ENCODE measurements at regions of chr4 and their contacts with region 1.

Region 1: DNA sequence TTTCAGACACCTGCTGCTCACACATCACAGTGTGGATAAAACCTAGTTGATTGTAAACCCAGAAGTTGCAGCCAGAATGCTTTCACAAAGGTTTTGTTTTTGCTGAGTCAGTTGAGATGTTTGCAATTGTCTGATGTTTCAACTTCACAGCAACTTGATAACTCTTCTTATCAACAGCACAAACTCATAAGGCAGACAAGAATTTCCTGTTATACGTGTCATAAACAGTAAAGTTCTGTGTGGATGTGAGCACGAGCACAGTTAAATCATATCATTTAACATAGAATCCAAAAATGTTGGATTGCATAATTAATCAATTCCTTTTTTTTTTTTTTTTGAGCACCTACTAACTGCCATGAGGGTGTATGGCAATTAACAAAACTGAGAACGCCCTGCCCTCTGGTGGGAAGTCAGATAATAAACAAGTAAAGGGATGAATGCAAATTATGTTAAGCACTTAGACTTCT is 512.2 kb downstream of the PDHA2 start:
- DNase-seq: peak; percentile 77
- H3K4me3 ChIP-seq: no peak overlapping the region
- H3K27ac ChIP-seq: peak overlapping the region; percentile 62
- H3K4me1 ChIP-seq: peaks cover 30% of the 10 kb centered on the region
- H3K27me3 ChIP-seq: no peaks in the 10 kb centered on the region
- CTCF ChIP-seq: peak; percentile 13 to 21
- POLR2A ChIP-seq: no peak

Region 2: DNA sequence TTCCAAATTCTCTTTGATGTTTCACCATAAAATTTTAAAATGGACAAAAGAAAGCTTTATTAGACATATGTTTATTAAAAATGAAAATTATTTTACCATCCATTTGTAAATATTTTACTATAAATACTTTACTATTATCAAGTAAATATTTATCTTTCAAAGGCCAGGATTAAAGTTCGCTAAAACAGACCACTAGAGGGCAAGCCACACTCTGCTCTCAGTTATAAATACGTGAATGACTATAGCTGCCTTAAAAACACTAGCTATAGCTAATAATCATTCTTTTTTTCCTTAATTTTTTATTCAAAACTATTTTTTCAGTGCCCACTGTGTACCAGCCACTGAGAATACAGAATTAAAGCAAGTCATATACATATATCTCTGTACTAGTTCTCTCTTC is 841.9 kb before region 1 on chr4:
- CTCF ChIA-PET with region 1: interaction called, 16 read pairs
- POLR2A ChIA-PET with region 1: no interaction called
- dilution Hi-C with region 1: no loop called
- intact Hi-C with region 1: loop called (anchors 1 kb)
- DNase-seq: peak; percentile 52
- H3K4me3 ChIP-seq: no peak overlapping the region
- H3K27ac ChIP-seq: no peak overlapping the region
- H3K4me1 ChIP-seq: peaks cover 37% of the 10 kb centered on the region
- H3K27me3 ChIP-seq: no peaks in the 10 kb centered on the region
- CTCF ChIP-seq: peak; percentile 45 to 52
- POLR2A ChIP-seq: no peak

Region 3: DNA sequence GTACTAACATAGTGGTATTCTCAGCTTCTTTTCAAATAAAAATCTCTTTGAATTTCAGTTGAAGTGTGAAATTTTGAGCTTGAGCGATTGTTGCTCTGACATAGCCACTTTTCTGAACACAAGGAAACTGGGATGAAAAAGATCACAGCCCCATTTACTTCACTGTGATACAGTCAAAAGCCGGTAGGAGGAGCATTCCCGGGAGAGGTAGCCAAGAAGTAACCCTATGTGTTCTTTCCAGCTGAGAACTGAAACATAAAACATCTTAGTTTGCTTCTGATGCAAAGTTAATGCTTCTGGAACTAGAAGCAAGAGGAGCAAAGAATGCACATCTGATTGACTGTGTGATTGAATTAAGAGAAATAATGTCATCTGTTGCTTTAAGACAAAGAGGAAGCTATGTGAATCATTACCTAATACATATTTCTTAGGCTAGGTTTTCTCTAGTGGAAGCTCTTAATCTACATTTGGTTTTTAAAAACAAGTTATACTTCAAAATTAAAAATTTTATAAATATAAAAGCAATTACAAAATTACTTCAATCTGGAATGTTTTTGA is 715.0 kb before region 1 on chr4:
- CTCF ChIA-PET with region 1: interaction called, 4 read pairs
- POLR2A ChIA-PET with region 1: no interaction called
- dilution Hi-C with region 1: no loop called
- intact Hi-C with region 1: loop called (anchors 5 kb)
- DNase-seq: peak; percentile 46
- H3K4me3 ChIP-seq: no peak overlapping the region
- H3K27ac ChIP-seq: no peak overlapping the region
- H3K4me1 ChIP-seq: no peaks in the 10 kb centered on the region
- H3K27me3 ChIP-seq: no peaks in the 10 kb centered on the region
- CTCF ChIP-seq: peak; percentile 38 to 45
- POLR2A ChIP-seq: no peak

Region 4: GRCh38 chr4:95761429-95762225 is 590.5 kb before region 1 on chr4:
- CTCF ChIA-PET with region 1: no interaction called
- POLR2A ChIA-PET with region 1: no interaction called
- dilution Hi-C with region 1: no loop called
- intact Hi-C with region 1: loop called (anchors 2 kb)
- DNase-seq: peak; percentile 81
- H3K4me3 ChIP-seq: no peak overlapping the region
- H3K27ac ChIP-seq: peak overlapping the region; percentile 30
- H3K4me1 ChIP-seq: peaks cover 30% of the 10 kb centered on the region
- H3K27me3 ChIP-seq: peaks cover 0 to 2% of the 10 kb centered on the region in 2 experiments
- CTCF ChIP-seq: no peak
- POLR2A ChIP-seq: no peak

Region 5: GRCh38 chr4:96395747-96396146 is 43.7 kb after region 1 on chr4:
- CTCF ChIA-PET with region 1: no interaction called
- POLR2A ChIA-PET with region 1: no interaction called
- dilution Hi-C with region 1: no loop called
- intact Hi-C with region 1: no loop called
- DNase-seq: no peak
- H3K4me3 ChIP-seq: no peak overlapping the region
- H3K27ac ChIP-seq: no peak overlapping the region
- H3K4me1 ChIP-seq: no peaks in the 10 kb centered on the region
- H3K27me3 ChIP-seq: no peaks in the 10 kb centered on the region
- CTCF ChIP-seq: no peak
- POLR2A ChIP-seq: no peak

Region 6: DNA sequence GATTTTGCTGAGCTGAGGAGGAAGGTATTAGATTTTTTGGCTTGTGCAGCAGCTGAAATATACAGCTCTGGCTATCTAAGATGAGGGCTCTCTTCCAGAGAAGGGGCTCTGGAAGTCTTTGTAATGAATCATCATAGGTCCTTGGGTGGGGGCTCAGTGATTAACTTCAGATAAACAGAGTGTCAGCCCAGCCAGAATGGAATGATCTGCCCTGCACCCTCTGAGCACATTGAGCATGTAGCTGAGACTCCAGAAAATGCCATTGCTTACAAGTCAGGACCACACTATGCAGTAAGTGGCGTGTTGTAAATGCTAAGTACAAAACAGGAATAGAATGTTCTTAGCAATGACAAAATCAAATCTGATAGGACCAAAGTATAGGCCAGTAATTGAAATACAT is 323.8 kb after region 1 on chr4:
- CTCF ChIA-PET with region 1: no interaction called
- POLR2A ChIA-PET with region 1: interaction called, 5 read pairs
- dilution Hi-C with region 1: no loop called
- intact Hi-C with region 1: loop called (anchors 2 kb)
- DNase-seq: no peak
- H3K4me3 ChIP-seq: no peak overlapping the region
- H3K27ac ChIP-seq: peak overlapping the region; percentile 93
- H3K4me1 ChIP-seq: peaks cover 39% of the 10 kb centered on the region
- H3K27me3 ChIP-seq: no peaks in the 10 kb centered on the region
- CTCF ChIP-seq: no peak
- POLR2A ChIP-seq: no peak

Region 7: DNA sequence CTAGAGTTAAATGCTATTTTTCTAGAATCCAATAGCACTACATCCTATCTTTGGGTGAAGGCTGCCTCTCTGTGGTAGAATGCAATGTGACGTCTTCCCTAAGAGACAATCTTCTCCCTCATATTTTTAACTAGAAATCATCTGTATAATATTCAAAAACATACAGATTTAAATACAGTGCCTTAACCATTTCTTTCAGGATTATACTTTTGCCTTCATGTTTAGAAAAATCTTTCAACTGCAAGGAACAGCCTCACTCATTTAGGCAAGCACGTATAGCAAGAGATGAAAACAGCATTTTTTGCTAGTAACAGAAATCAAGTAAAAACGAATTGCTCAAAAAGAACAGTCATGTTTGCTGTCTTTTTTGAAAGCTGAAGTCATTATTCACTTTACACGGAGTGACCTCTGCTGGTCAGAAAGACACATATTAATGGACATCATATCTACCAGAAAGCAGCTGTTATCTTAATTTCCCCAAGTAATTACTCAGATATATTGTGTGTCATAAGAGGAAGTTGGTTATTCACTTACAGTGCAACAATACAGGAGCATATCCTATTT is 1368.9 kb after region 1 on chr4:
- CTCF ChIA-PET with region 1: interaction called, 8 read pairs
- POLR2A ChIA-PET with region 1: no interaction called
- dilution Hi-C with region 1: no loop called
- intact Hi-C with region 1: loop called (anchors 5 kb)
- DNase-seq: peak; percentile 93
- H3K4me3 ChIP-seq: no peak overlapping the region
- H3K27ac ChIP-seq: peak overlapping the region; percentile 60
- H3K4me1 ChIP-seq: peaks cover 12% of the 10 kb centered on the region
- H3K27me3 ChIP-seq: no peaks in the 10 kb centered on the region
- CTCF ChIP-seq: peak; percentile 3 to 32
- POLR2A ChIP-seq: no peak